Naive thymus-derived CD4-positive, alpha-beta T cell (primary cell): ENCODE measurements at regions of chr16 and their contacts with region 1.

Region 1: GRCh38 chr16:50368410-50369132 is at the start of gene BRD7:
- DNase-seq: peak; percentile 50 to 82 (median 68)
- ATAC-seq: peak; percentile 98
- H3K4me3 ChIP-seq: peak within 1 kb of the TSS; percentile 61
- H3K4me3 Mint-ChIP-seq: peak within 1 kb of the TSS; percentile 92 to 98 (median 96)
- H3K27ac ChIP-seq: peak within 1 kb of the TSS; percentile 86
- H3K27ac Mint-ChIP-seq: peak within 1 kb of the TSS; percentile 92 to 99 (median 96)
- H3K4me1 ChIP-seq: peaks cover 27 to 39% of the 10 kb centered on the region in 2 donors
- H3K4me1 Mint-ChIP-seq: peaks cover 40 to 58% (median 56%) of the 10 kb centered on the region in 7 donors
- H3K27me3 ChIP-seq: no peaks in the 10 kb centered on the region
- H3K27me3 Mint-ChIP-seq: no peaks in the 10 kb centered on the region
- total RNA-seq, gene BRD7: 80.9 to 91.1 (median 85.0) TPM

Region 2: DNA sequence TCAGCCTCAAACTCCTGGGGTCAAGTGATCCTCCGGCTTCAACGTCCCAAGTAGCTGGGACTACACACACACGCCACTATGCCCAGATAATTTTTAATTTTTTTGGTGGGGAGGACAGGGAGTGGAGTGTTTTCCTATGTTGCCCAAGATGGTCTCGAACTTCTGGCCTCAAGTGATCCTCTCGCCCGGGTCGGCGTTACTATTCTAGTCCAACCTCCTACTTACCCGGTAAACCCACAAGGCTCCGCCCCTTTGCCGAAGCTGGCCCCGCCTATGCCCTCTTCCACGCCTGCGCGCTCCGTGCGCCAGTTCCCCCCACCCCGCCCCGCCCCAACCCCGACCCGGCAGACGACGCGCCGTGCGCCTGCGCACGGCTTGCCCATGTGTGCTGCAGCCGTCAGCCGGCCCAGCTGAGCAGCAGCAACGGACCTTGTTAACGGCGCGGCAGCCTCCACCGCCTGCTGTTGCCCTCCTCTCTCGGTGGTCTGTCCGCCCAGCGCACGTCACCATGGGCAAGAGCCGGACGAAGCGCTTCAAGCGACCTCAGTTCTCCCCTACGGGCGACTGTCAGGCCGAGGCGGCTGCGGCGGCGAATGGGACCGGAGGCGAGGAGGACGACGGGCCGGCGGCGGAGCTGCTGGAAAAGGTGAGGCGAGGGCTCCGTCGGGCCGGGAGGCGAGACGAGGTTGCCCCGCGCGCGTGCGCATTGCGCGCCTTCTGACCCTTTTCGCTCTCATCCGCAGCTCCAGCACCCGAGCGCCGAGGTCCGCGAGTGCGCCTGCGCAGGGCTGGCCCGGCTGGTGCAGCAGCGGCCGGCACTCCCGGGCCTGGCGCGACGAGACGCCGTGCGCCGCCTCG is 302.7 kb before region 1 on chr16 and contains the start of gene HEATR3:
- CTCF ChIA-PET with region 1: no interaction called
- POLR2A ChIA-PET with region 1: no interaction called
- intact Hi-C with region 1: loop called (anchors 1 to 5 kb)
- DNase-seq: peak; percentile 86 to 96 (median 90)
- ATAC-seq: peak; percentile 93
- H3K4me3 ChIP-seq: peak within 1 kb of the TSS; percentile 91
- H3K4me3 Mint-ChIP-seq: peak within 1 kb of the TSS; percentile 80 to 97 (median 92)
- H3K27ac ChIP-seq: peak within 1 kb of the TSS; percentile 81
- H3K27ac Mint-ChIP-seq: peak within 1 kb of the TSS; percentile 55 to 96 (median 93)
- H3K4me1 ChIP-seq: peaks cover 17 to 18% of the 10 kb centered on the region in 2 donors
- H3K4me1 Mint-ChIP-seq: peaks cover 34 to 49% (median 44%) of the 10 kb centered on the region in 7 donors
- H3K27me3 ChIP-seq: no peaks in the 10 kb centered on the region
- H3K27me3 Mint-ChIP-seq: no peaks in the 10 kb centered on the region
- total RNA-seq, gene HEATR3: 12.5 to 27.5 (median 23.5) TPM

Region 3: GRCh38 chr16:50291719-50292565 is 76.6 kb before region 1 on chr16:
- CTCF ChIA-PET with region 1: no interaction called
- POLR2A ChIA-PET with region 1: no interaction called
- intact Hi-C with region 1: no loop called
- DNase-seq: no peak
- ATAC-seq: no peak
- H3K4me3 ChIP-seq: no peak overlapping the region
- H3K4me3 Mint-ChIP-seq: no peak overlapping the region
- H3K27ac ChIP-seq: peak overlapping the region; percentile 13
- H3K27ac Mint-ChIP-seq: peak overlapping the region in 2 of 9 donors; percentile 41 to 75
- H3K4me1 ChIP-seq: peaks cover 0 to 5% of the 10 kb centered on the region in 2 donors
- H3K4me1 Mint-ChIP-seq: peaks cover 0 to 28% (median 14%) of the 10 kb centered on the region in 7 donors
- H3K27me3 ChIP-seq: no peaks in the 10 kb centered on the region
- H3K27me3 Mint-ChIP-seq: no peaks in the 10 kb centered on the region

Region 4: GRCh38 chr16:50397196-50397595 is 28.6 kb after region 1 on chr16:
- CTCF ChIA-PET with region 1: no interaction called
- POLR2A ChIA-PET with region 1: interaction called, 6 read pairs
- intact Hi-C with region 1: loop called in 1 of 2 experiments (anchors 2 kb)
- DNase-seq: no peak
- ATAC-seq: no peak
- H3K4me3 ChIP-seq: no peak overlapping the region
- H3K4me3 Mint-ChIP-seq: no peak overlapping the region
- H3K27ac ChIP-seq: no peak overlapping the region
- H3K27ac Mint-ChIP-seq: peak overlapping the region in 5 of 9 donors; percentile 28 to 87 (median 73)
- H3K4me1 ChIP-seq: peaks cover 0 to 15% of the 10 kb centered on the region in 2 donors
- H3K4me1 Mint-ChIP-seq: peaks cover 5 to 39% (median 30%) of the 10 kb centered on the region in 7 donors
- H3K27me3 ChIP-seq: no peaks in the 10 kb centered on the region
- H3K27me3 Mint-ChIP-seq: peaks cover 0 to 2% (median 0%) of the 10 kb centered on the region in 5 donors

Region 5: GRCh38 chr16:50644729-50645128 is 276.2 kb after region 1 on chr16:
- CTCF ChIA-PET with region 1: interaction called, 4 read pairs
- POLR2A ChIA-PET with region 1: interaction called, 4 read pairs
- intact Hi-C with region 1: loop called in 1 of 2 experiments (anchors 5 kb)
- DNase-seq: peak in 6 of 9 donors; percentile 31 to 53 (median 48)
- ATAC-seq: peak; percentile 72
- H3K4me3 ChIP-seq: no peak overlapping the region
- H3K4me3 Mint-ChIP-seq: no peak overlapping the region
- H3K27ac ChIP-seq: no peak overlapping the region
- H3K27ac Mint-ChIP-seq: peak overlapping the region in 5 of 9 donors; percentile 0 to 39 (median 16)
- H3K4me1 ChIP-seq: no peaks in the 10 kb centered on the region
- H3K4me1 Mint-ChIP-seq: peaks cover 5 to 7% (median 6%) of the 10 kb centered on the region in 7 donors
- H3K27me3 ChIP-seq: no peaks in the 10 kb centered on the region
- H3K27me3 Mint-ChIP-seq: no peaks in the 10 kb centered on the region

Region 6: GRCh38 chr16:50741808-50742575 is 373.4 kb after region 1 on chr16 and contains the start of gene CYLD:
- CTCF ChIA-PET with region 1: interaction called, 4 read pairs
- POLR2A ChIA-PET with region 1: interaction called, 4 read pairs
- intact Hi-C with region 1: loop called (anchors 1 to 2 kb)
- DNase-seq: peak; percentile 95 to 100 (median 100)
- ATAC-seq: peak; percentile 94
- H3K4me3 ChIP-seq: peak within 1 kb of the TSS; percentile 70
- H3K4me3 Mint-ChIP-seq: peak within 1 kb of the TSS; percentile 90 to 100 (median 96)
- H3K27ac ChIP-seq: peak within 1 kb of the TSS; percentile 100
- H3K27ac Mint-ChIP-seq: peak within 1 kb of the TSS; percentile 94 to 99 (median 98)
- H3K4me1 ChIP-seq: peaks cover 7 to 38% of the 10 kb centered on the region in 2 donors
- H3K4me1 Mint-ChIP-seq: peaks cover 28 to 52% (median 40%) of the 10 kb centered on the region in 7 donors
- H3K27me3 ChIP-seq: no peaks in the 10 kb centered on the region
- H3K27me3 Mint-ChIP-seq: no peaks in the 10 kb centered on the region
- total RNA-seq, gene CYLD: 259 to 393 (median 336) TPM